BJ (cell line): ENCODE measurements at regions of chr11 and their contacts with region 1.

Region 1: DNA sequence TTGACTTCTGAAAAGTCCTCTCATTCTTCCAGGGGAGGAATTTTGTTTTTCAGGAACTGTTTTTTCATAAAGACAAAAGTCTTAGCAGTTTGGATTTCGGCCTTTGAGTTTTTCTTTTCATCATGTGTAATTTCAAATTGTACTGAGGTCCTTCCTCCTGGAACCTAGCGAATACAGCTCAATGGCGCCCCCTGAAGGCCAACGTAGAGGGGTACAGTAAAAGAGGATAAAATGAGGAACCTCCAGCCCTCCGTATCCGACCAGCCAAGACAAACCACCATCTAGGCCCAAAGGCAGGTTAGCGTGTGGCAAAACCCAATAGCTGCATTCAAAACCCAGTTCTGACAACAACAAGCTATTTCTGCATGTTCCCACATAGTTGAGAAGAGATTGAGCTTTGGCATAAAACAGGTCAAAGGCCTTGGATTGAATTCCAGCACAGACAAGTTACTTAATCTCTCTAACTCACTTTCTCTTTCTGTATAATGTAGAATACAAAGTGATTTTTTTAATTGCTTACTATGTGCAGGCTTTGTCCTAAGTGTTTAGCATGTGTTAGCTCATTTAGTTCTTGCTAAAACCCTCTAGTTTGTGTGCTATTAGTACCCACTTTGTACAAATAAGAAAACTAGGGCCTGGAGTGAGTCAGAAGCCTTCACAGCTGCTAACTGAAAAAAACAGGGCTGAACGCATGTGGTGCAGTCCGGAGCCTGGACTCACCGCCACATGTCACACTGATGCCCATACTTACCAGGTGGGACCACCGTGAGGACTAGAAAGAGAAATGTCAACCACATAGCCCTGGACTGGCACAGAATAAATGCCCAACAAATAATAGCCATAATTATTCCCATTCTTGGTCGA is 43.2 kb upstream of the ETS1 start:
- DNase-seq: no peak
- H3K4me3 ChIP-seq: no peak overlapping the region
- H3K27me3 ChIP-seq: no peaks in the 10 kb centered on the region
- CTCF ChIP-seq: peak; percentile 87

Region 2: GRCh38 chr11:128157423-128158298 is 472.9 kb before region 1 on chr11:
- CTCF ChIA-PET with region 1: interaction called, 28 read pairs
- POLR2A ChIA-PET with region 1: no interaction called
- DNase-seq: peak; percentile 21
- H3K4me3 ChIP-seq: no peak overlapping the region
- H3K27me3 ChIP-seq: peaks cover 2% of the 10 kb centered on the region; the same call in 1 of the 2 replicates
- CTCF ChIP-seq: peak; percentile 80

Region 3: DNA sequence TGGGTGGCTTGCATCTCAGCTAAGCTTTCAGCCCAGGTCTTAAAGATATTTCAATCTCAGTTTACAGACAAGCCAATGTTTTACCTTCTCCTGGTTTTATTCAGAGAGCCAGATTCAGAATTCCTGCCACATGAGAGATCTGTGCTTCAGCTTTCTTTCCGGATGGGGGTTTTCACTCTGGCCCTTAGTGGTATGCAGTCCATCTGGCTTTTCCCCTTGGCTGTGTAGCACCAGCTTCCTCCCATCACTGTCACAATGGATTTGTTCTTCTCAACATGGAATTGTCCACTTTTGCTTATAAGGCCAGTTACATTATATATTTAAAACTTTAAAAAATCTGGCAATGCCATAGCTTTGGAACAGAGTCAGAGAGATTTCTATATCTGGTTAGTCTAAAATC is 347.1 kb before region 1 on chr11:
- CTCF ChIA-PET with region 1: interaction called, 57 read pairs
- POLR2A ChIA-PET with region 1: interaction called, 3 read pairs
- DNase-seq: no peak
- H3K4me3 ChIP-seq: no peak overlapping the region
- H3K27me3 ChIP-seq: no peaks in the 10 kb centered on the region
- CTCF ChIP-seq: no peak

Region 4: GRCh38 chr11:128299132-128299726 is 331.4 kb before region 1 on chr11:
- CTCF ChIA-PET with region 1: interaction called, 17 read pairs
- POLR2A ChIA-PET with region 1: no interaction called
- DNase-seq: peak; percentile 90
- H3K4me3 ChIP-seq: no peak overlapping the region
- H3K27me3 ChIP-seq: no peaks in the 10 kb centered on the region
- CTCF ChIP-seq: no peak

Region 5: DNA sequence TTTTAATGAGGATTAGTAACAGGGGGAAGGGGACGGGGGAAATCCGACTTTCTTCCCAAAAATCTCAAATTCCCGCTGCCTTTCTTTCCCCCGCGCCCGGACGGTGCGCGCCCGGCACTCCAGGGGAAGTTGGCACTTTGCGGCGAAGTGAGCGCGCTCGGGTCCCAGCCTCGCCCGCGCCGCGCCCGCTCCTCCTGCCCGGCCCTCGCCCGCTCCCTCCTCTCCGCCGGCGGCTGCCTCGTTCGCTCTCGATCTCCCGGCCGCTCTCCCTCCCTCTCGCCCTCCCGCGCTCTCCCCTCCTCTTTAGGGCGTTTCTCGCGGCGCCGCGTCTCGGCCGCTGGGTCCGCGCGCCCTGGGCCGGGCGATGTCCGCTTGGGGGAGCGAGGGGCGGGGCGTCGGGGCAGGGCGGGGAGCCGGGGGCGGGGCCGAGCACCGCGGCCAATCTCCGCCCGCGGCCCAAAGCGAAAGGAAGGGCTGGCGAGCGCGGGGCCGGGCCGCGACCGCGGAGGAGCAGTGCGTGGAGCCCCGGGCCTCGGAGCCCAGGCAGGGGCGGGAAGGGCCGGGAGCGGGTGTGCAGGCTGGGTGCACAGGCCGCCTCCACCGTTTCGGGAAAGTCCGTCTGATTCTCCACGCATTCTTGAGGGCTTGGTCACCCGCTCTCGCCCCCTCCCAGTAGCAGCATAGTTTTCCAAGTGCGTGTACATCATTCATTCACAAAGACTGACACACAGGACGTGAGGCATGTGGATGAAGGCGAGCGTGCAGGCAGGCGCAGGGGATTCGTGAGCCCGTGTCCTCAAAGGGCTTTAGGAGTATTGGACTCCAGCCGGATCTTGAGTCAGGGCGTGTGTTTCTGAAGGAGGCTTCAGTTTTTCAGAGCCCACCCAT is 108.3 kb before region 1 on chr11:
- CTCF ChIA-PET with region 1: interaction called, 47 read pairs
- POLR2A ChIA-PET with region 1: no interaction called
- DNase-seq: peak; percentile 95
- H3K4me3 ChIP-seq: peak overlapping the region; percentile 76
- H3K27me3 ChIP-seq: no peaks in the 10 kb centered on the region
- CTCF ChIP-seq: no peak

Region 6: GRCh38 chr11:128620309-128621100 is 10.1 kb before region 1 on chr11:
- CTCF ChIA-PET with region 1: interaction called, 10 read pairs
- POLR2A ChIA-PET with region 1: no interaction called
- DNase-seq: no peak
- H3K4me3 ChIP-seq: no peak overlapping the region
- H3K27me3 ChIP-seq: no peaks in the 10 kb centered on the region
- CTCF ChIP-seq: no peak